CD4-positive, alpha-beta memory T cell (primary cell): ENCODE measurements at regions of chr11 and their contacts with region 1.

Region 1: GRCh38 chr11:117946842-117947526 is 17.8 kb upstream of the TMPRSS13 start:
- DNase-seq: peak; percentile 70 to 77 (median 72)
- H3K4me3 ChIP-seq: no peak overlapping the region
- H3K4me3 Mint-ChIP-seq: peak overlapping the region in 7 of 8 donors; percentile 7 to 85 (median 47)
- H3K27ac ChIP-seq: no peak overlapping the region
- H3K27ac Mint-ChIP-seq: peak overlapping the region; percentile 38 to 97 (median 82)
- H3K4me1 ChIP-seq: peaks cover 73% of the 10 kb centered on the region
- H3K4me1 Mint-ChIP-seq: peaks cover 54 to 83% (median 70%) of the 10 kb centered on the region in 4 donors
- H3K27me3 ChIP-seq: no peaks in the 10 kb centered on the region
- H3K27me3 Mint-ChIP-seq: no peaks in the 10 kb centered on the region

Region 2: GRCh38 chr11:117817368-117818040 is 129.5 kb before region 1 on chr11:
- CTCF ChIA-PET with region 1: interaction called, 216 read pairs
- POLR2A ChIA-PET with region 1: interaction called, 21 read pairs
- intact Hi-C with region 1: no loop called
- DNase-seq: peak; percentile 75 to 82 (median 79)
- H3K4me3 ChIP-seq: no peak overlapping the region
- H3K4me3 Mint-ChIP-seq: peak overlapping the region in 5 of 8 donors; percentile 43 to 74 (median 61)
- H3K27ac ChIP-seq: peak overlapping the region; percentile 74
- H3K27ac Mint-ChIP-seq: peak overlapping the region; percentile 80 to 94 (median 93)
- H3K4me1 ChIP-seq: peaks cover 52% of the 10 kb centered on the region
- H3K4me1 Mint-ChIP-seq: peaks cover 26 to 69% (median 45%) of the 10 kb centered on the region in 4 donors
- H3K27me3 ChIP-seq: no peaks in the 10 kb centered on the region
- H3K27me3 Mint-ChIP-seq: no peaks in the 10 kb centered on the region

Region 3: GRCh38 chr11:117836077-117836960 is 110.7 kb before region 1 on chr11:
- CTCF ChIA-PET with region 1: interaction called, 226 read pairs
- POLR2A ChIA-PET with region 1: no interaction called
- intact Hi-C with region 1: no loop called
- DNase-seq: no peak
- H3K4me3 ChIP-seq: no peak overlapping the region
- H3K4me3 Mint-ChIP-seq: no peak overlapping the region
- H3K27ac ChIP-seq: no peak overlapping the region
- H3K27ac Mint-ChIP-seq: peak overlapping the region in 2 of 7 donors; percentile 41 to 51
- H3K4me1 ChIP-seq: no peaks in the 10 kb centered on the region
- H3K4me1 Mint-ChIP-seq: peaks cover 0 to 7% (median 3%) of the 10 kb centered on the region in 4 donors
- H3K27me3 ChIP-seq: no peaks in the 10 kb centered on the region
- H3K27me3 Mint-ChIP-seq: peaks cover 0 to 2% of the 10 kb centered on the region in 2 donors

Region 4: GRCh38 chr11:117923773-117924172 is 23.2 kb before region 1 on chr11:
- CTCF ChIA-PET with region 1: interaction called, 14 read pairs
- POLR2A ChIA-PET with region 1: interaction called, 4 read pairs
- intact Hi-C with region 1: no loop called
- DNase-seq: no peak
- H3K4me3 ChIP-seq: no peak overlapping the region
- H3K4me3 Mint-ChIP-seq: no peak overlapping the region
- H3K27ac ChIP-seq: no peak overlapping the region
- H3K27ac Mint-ChIP-seq: peak overlapping the region in 1 of 7 donors; percentile 36
- H3K4me1 ChIP-seq: peaks cover 10% of the 10 kb centered on the region
- H3K4me1 Mint-ChIP-seq: peaks cover 4 to 10% (median 7%) of the 10 kb centered on the region in 4 donors
- H3K27me3 ChIP-seq: peaks cover 5% of the 10 kb centered on the region
- H3K27me3 Mint-ChIP-seq: no peaks in the 10 kb centered on the region

Region 5: GRCh38 chr11:117970400-117971024 is 23.5 kb after region 1 on chr11:
- CTCF ChIA-PET with region 1: interaction called, 402 read pairs
- POLR2A ChIA-PET with region 1: interaction called, 1,750 read pairs
- intact Hi-C with region 1: no loop called
- DNase-seq: peak; percentile 33 to 75 (median 43)
- H3K4me3 ChIP-seq: peak overlapping the region; percentile 17 to 21
- H3K4me3 Mint-ChIP-seq: peak overlapping the region in 7 of 8 donors; percentile 59 to 89 (median 76)
- H3K27ac ChIP-seq: peak overlapping the region; percentile 27
- H3K27ac Mint-ChIP-seq: peak overlapping the region; percentile 76 to 91 (median 87)
- H3K4me1 ChIP-seq: peaks cover 66% of the 10 kb centered on the region
- H3K4me1 Mint-ChIP-seq: peaks cover 49 to 69% (median 62%) of the 10 kb centered on the region in 4 donors
- H3K27me3 ChIP-seq: no peaks in the 10 kb centered on the region
- H3K27me3 Mint-ChIP-seq: no peaks in the 10 kb centered on the region

Region 6: GRCh38 chr11:118046051-118046963 is 99.3 kb after region 1 on chr11:
- CTCF ChIA-PET with region 1: interaction called, 400 read pairs
- POLR2A ChIA-PET with region 1: interaction called, 258 read pairs
- intact Hi-C with region 1: loop called (anchors 1 kb)
- DNase-seq: peak; percentile 66 to 83 (median 72)
- H3K4me3 ChIP-seq: peak overlapping the region in 1 of 2 donors; percentile 15
- H3K4me3 Mint-ChIP-seq: peak overlapping the region in 7 of 8 donors; percentile 17 to 82 (median 57)
- H3K27ac ChIP-seq: peak overlapping the region; percentile 75
- H3K27ac Mint-ChIP-seq: peak overlapping the region; percentile 81 to 99 (median 94)
- H3K4me1 ChIP-seq: peaks cover 99% of the 10 kb centered on the region
- H3K4me1 Mint-ChIP-seq: peaks cover 68 to 96% (median 85%) of the 10 kb centered on the region in 4 donors
- H3K27me3 ChIP-seq: no peaks in the 10 kb centered on the region
- H3K27me3 Mint-ChIP-seq: no peaks in the 10 kb centered on the region